ENCODE measurements at regions of chr1 and their contacts with region 1.

Region 1: GRCh38 chr1:109687616-109688499 is at the start of gene GSTM1:
- DNase-seq: peak; percentile 90
- H3K4me3 ChIP-seq: peak within 1 kb of the TSS in 1 of 4 donors; percentile 26
- H3K27ac ChIP-seq: peak within 1 kb of the TSS in 1 of 4 donors; percentile 78
- H3K4me1 ChIP-seq: no peaks in the 10 kb centered on the region
- H3K27me3 ChIP-seq: no peaks in the 10 kb centered on the region
- CTCF ChIP-seq: no peak
- EP300 ChIP-seq: no peak
- POLR2A ChIP-seq: no peak
- total RNA-seq, gene GSTM1: 12.7 TPM in 1 of 4 donors, not detected in the others

Region 2: GRCh38 chr1:109643385-109644230 is 44.2 kb before region 1 on chr1:
- intact Hi-C with region 1: loop called (anchors 5 kb)
- DNase-seq: peak; percentile 92
- H3K4me3 ChIP-seq: peak overlapping the region in 1 of 4 donors; percentile 6
- H3K27ac ChIP-seq: peak overlapping the region in 1 of 4 donors; percentile 30
- H3K4me1 ChIP-seq: peaks cover 0 to 10% (median 8%) of the 10 kb centered on the region in 4 donors
- H3K27me3 ChIP-seq: no peaks in the 10 kb centered on the region
- CTCF ChIP-seq: peak; percentile 75 to 91 (median 86)
- EP300 ChIP-seq: no peak
- POLR2A ChIP-seq: no peak

Region 3: DNA sequence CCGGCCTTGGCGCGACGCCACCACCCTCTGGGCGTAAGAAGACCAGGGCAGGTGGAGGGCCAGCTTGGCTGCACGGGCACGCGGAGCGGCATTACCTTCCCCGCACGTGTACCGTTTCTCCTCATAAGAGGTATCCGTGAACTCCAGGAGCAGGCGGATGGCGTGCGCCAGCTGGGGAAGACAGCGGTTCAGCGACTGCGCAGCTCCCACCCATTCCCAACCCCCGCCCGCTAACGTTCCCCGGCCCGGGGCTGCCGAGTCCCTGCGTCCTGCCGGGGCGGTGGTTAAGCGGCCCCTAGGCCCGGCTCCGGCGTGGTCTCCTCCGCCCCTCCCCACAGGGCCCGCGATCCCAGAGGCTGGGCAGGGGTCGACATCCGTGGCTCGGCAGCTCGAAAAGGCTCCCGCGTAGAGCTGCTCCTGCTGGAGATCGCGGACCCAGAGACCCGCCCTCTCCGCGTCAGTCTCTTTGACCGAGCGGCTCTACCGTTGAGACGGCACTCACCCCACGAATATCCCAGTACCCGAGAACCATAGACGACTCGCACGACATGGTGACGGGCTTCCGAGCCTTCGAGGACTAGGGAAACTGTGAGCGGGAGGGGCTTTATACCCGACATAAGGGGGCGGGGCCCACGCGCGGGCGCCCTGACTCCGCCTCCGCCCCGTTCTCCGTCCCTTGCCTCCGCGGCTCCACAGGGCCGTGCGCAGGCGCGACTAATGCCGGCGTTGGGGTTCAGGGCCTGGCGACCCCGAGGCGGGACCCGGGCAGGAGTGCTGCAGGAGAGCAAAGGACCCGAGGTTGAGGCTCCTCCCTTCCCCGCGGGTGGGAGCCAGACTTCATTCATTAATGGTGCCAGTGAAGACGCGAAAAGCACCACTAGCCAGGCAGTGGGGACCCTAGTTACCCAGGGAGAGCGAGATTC is 52.1 kb after region 1 on chr1:
- intact Hi-C with region 1: loop called (anchors 5 kb)
- DNase-seq: peak; percentile 90
- H3K4me3 ChIP-seq: peak overlapping the region; percentile 56 to 79 (median 73)
- H3K27ac ChIP-seq: peak overlapping the region; percentile 64 to 85 (median 82)
- H3K4me1 ChIP-seq: peaks cover 0 to 20% (median 14%) of the 10 kb centered on the region in 4 donors
- H3K27me3 ChIP-seq: no peaks in the 10 kb centered on the region
- CTCF ChIP-seq: no peak
- EP300 ChIP-seq: no peak
- POLR2A ChIP-seq: peak; percentile 63 to 87

Region 4: DNA sequence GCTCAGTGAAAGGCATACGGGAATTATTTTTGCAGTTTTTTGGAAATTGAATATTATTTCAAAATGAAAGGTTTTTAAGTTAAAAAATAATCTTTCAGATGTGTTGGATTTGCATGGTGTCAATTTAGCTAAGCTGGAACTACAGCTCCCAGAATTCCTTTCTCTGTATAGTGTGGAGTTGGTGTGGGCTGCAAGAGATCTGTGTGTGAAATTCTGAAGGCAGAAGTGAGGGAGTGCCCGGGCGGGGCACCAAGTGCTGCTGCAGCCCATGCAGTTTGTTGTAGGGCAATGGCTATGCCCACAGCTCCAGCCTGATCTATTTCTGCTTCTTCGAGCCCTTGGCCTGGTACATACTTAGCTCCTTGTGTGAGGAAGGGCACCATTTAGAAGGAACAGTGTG is 162.3 kb after region 1 on chr1:
- intact Hi-C with region 1: no loop called
- DNase-seq: no peak
- H3K4me3 ChIP-seq: no peak overlapping the region
- H3K27ac ChIP-seq: no peak overlapping the region
- H3K4me1 ChIP-seq: peaks cover 0 to 6% (median 0%) of the 10 kb centered on the region in 4 donors
- H3K27me3 ChIP-seq: no peaks in the 10 kb centered on the region
- CTCF ChIP-seq: no peak
- EP300 ChIP-seq: no peak
- POLR2A ChIP-seq: no peak